ENCODE measurements at regions of chr1 and their contacts with region 1.

Region 1: GRCh38 chr1:167059045-167059808 is 30.9 kb downstream of the GPA33 start:
- DNase-seq: peak; percentile 46 to 85 (median 74)
- ATAC-seq: peak; percentile 84
- H3K4me3 ChIP-seq: no peak overlapping the region
- H3K4me3 Mint-ChIP-seq: no peak overlapping the region
- H3K27ac ChIP-seq: no peak overlapping the region
- H3K27ac Mint-ChIP-seq: no peak overlapping the region
- H3K4me1 ChIP-seq: peaks cover 5% of the 10 kb centered on the region
- H3K4me1 Mint-ChIP-seq: peaks cover 6% of the 10 kb centered on the region
- H3K27me3 ChIP-seq: no peaks in the 10 kb centered on the region
- H3K27me3 Mint-ChIP-seq: no peaks in the 10 kb centered on the region
- CTCF ChIP-seq: peak; percentile 93

Region 2: GRCh38 chr1:165928075-165928731 is 1131.0 kb before region 1 on chr1:
- CTCF ChIA-PET with region 1: no interaction called
- POLR2A ChIA-PET with region 1: no interaction called
- intact Hi-C with region 1: loop called in 1 of 2 experiments (anchors 10 kb)
- DNase-seq: peak in 6 of 9 experiments; percentile 13 to 65 (median 37)
- ATAC-seq: peak; percentile 58
- H3K4me3 ChIP-seq: no peak overlapping the region
- H3K4me3 Mint-ChIP-seq: no peak overlapping the region
- H3K27ac ChIP-seq: no peak overlapping the region
- H3K27ac Mint-ChIP-seq: no peak overlapping the region
- H3K4me1 ChIP-seq: no peaks in the 10 kb centered on the region
- H3K4me1 Mint-ChIP-seq: no peaks in the 10 kb centered on the region
- H3K27me3 ChIP-seq: peaks cover 3 to 4% of the 10 kb centered on the region in 2 experiments
- H3K27me3 Mint-ChIP-seq: peaks cover 28% of the 10 kb centered on the region
- CTCF ChIP-seq: peak; percentile 51

Region 3: DNA sequence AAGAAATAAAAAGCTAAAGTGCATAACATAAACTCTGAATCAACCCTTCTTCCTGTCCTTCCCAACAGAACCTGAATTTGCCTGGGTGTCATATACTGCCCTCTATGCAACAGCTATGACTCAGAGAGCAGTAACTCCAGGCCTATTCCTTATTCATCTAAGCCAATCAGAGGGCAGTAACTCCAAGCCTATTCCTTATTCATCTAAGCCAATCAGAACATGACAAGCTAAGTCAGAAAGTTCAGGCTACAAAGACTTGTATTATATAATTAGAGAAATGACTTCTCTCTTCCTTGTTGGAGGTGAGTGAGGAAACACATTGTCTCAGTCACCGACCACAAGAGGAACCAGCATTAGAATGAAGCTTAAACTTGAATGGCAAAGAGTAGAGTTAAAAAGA is 157.0 kb before region 1 on chr1:
- CTCF ChIA-PET with region 1: interaction called, 718 read pairs
- POLR2A ChIA-PET with region 1: interaction called, 5 read pairs
- intact Hi-C with region 1: no loop called
- DNase-seq: peak in 1 of 9 experiments; percentile 20
- ATAC-seq: no peak
- H3K4me3 ChIP-seq: no peak overlapping the region
- H3K4me3 Mint-ChIP-seq: no peak overlapping the region
- H3K27ac ChIP-seq: no peak overlapping the region
- H3K27ac Mint-ChIP-seq: no peak overlapping the region
- H3K4me1 ChIP-seq: no peaks in the 10 kb centered on the region
- H3K4me1 Mint-ChIP-seq: no peaks in the 10 kb centered on the region
- H3K27me3 ChIP-seq: no peaks in the 10 kb centered on the region
- H3K27me3 Mint-ChIP-seq: peaks cover 8% of the 10 kb centered on the region
- CTCF ChIP-seq: no peak

Region 4: GRCh38 chr1:166975361-166976129 is 83.7 kb before region 1 on chr1 and contains the start of gene ILDR2:
- CTCF ChIA-PET with region 1: interaction called, 9 read pairs
- POLR2A ChIA-PET with region 1: no interaction called
- intact Hi-C with region 1: loop called in 1 of 2 experiments (anchors 2 kb)
- DNase-seq: peak; percentile 18 to 76 (median 53)
- ATAC-seq: peak; percentile 85
- H3K4me3 ChIP-seq: peak within 1 kb of the TSS; percentile 52 to 68
- H3K4me3 Mint-ChIP-seq: peak within 1 kb of the TSS; percentile 86
- H3K27ac ChIP-seq: peak within 1 kb of the TSS in 1 of 2 experiments; percentile 17
- H3K27ac Mint-ChIP-seq: peak within 1 kb of the TSS; percentile 1
- H3K4me1 ChIP-seq: peaks cover 9% of the 10 kb centered on the region
- H3K4me1 Mint-ChIP-seq: peaks cover 12% of the 10 kb centered on the region
- H3K27me3 ChIP-seq: peaks cover 0 to 14% of the 10 kb centered on the region in 2 experiments
- H3K27me3 Mint-ChIP-seq: peaks cover 22% of the 10 kb centered on the region
- CTCF ChIP-seq: no peak
- total RNA-seq, gene ILDR2: 0.50 to 0.54 TPM

Region 5: DNA sequence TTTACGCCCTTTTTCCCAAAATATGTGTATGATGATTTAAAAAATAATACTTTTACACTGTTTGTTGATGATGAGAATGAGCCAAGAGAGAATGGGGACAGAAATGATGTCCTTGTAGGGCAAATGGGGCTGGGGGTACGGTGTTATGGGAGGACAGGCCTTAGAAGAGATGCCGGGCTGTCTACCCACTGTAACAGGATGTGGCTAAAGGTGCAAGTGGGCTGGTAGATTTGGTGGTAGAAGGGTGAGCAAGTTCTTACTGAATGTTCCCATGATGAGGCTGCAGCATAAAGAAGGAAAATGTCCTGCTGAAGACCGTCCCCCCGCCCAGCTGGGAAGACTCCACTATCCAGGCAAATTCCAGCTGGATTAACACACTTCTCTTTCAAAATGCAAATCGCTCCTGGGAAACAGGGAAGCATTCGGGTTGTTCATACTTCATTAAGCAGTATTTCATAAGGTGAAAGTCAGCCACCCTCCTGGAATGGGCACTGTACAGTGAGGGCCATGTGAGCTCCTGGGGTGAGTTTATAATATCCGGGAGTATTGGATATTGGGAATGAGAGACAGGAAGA is 17.0 kb after region 1 on chr1:
- CTCF ChIA-PET with region 1: interaction called, 12 read pairs
- POLR2A ChIA-PET with region 1: no interaction called
- intact Hi-C with region 1: no loop called
- DNase-seq: peak in 2 of 9 experiments; percentile 20 to 46
- ATAC-seq: no peak
- H3K4me3 ChIP-seq: no peak overlapping the region
- H3K4me3 Mint-ChIP-seq: peak overlapping the region; percentile 52
- H3K27ac ChIP-seq: peak overlapping the region in 1 of 2 experiments; percentile 28
- H3K27ac Mint-ChIP-seq: no peak overlapping the region
- H3K4me1 ChIP-seq: peaks cover 20% of the 10 kb centered on the region
- H3K4me1 Mint-ChIP-seq: peaks cover 30% of the 10 kb centered on the region
- H3K27me3 ChIP-seq: no peaks in the 10 kb centered on the region
- H3K27me3 Mint-ChIP-seq: no peaks in the 10 kb centered on the region
- CTCF ChIP-seq: no peak

Measured in CD8-positive, alpha-beta T cell (primary cell).